Esophagus muscularis mucosa (tissue), 4 donors: ENCODE measurements at regions of chr6 and their contacts with region 1.

Region 1: GRCh38 chr6:87165185-87165584 is 9.8 kb downstream of the ZNF292 start:
- DNase-seq: no peak
- H3K4me3 ChIP-seq: no peak overlapping the region
- H3K27ac ChIP-seq: no peak overlapping the region
- H3K4me1 ChIP-seq: peaks cover 13 to 77% (median 70%) of the 10 kb centered on the region in 4 donors
- H3K27me3 ChIP-seq: no peaks in the 10 kb centered on the region
- CTCF ChIP-seq: no peak
- EP300 ChIP-seq: no peak
- POLR2A ChIP-seq: no peak

Region 2: DNA sequence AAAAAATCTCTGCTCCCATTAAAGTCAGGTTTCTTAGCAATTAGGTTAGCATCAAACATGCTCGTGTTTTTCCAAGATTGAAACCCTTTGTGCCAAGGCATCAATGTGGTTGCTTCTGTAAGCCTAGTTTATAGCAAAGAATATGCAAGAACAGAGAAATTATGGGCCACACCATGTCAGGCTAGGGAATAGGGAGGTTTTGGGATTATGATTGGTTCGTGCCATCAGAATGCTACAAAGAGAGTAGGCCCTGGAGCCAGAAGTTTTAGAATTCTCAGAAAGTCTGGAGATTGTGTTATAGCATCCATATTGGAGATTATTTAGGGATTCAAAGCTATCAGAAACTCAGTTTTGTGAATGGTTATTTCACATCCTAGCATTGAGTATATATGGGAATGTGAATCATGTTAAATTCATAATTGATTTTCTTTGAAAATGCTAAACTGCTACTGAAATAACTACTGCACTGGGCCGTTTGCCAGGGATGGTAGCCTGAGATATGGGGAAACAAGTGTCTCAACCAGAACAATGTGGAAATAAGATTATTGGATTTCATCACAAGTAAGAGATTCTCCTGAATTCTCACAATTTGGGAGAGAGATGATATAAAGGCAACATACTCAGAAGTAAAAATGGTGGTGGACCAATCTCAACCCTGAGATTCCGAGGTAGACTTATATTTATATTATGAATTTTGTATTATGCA is 35.4 kb after region 1 on chr6:
- intact Hi-C with region 1: loop called (anchors 5 kb)
- DNase-seq: no peak
- H3K4me3 ChIP-seq: no peak overlapping the region
- H3K27ac ChIP-seq: no peak overlapping the region
- H3K4me1 ChIP-seq: peaks cover 17 to 30% (median 23%) of the 10 kb centered on the region in 4 donors
- H3K27me3 ChIP-seq: no peaks in the 10 kb centered on the region
- CTCF ChIP-seq: no peak
- EP300 ChIP-seq: no peak
- POLR2A ChIP-seq: no peak

Region 3: DNA sequence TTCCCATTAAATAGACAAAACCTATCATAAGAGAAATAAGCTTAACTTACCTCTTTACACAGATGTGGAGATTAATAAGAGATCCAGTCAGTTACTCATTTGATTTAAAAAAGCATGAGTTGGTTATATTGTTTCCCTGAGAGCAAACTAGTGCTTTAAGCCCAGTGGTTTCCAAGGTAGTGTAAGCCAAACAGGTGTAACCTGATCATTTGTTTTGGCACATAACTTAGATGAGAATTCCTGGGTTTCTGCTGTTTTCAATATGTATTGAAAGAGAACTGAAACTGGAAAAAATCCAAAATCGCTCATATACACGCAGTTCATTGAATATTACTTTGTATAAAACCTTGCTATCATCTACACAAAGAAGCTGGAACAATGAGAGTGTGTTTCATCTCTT is 126.7 kb after region 1 on chr6:
- intact Hi-C with region 1: no loop called
- DNase-seq: no peak
- H3K4me3 ChIP-seq: no peak overlapping the region
- H3K27ac ChIP-seq: no peak overlapping the region
- H3K4me1 ChIP-seq: no peaks in the 10 kb centered on the region
- H3K27me3 ChIP-seq: no peaks in the 10 kb centered on the region
- CTCF ChIP-seq: no peak
- EP300 ChIP-seq: no peak
- POLR2A ChIP-seq: no peak

Region 4: GRCh38 chr6:87514831-87515230 is 349.6 kb after region 1 on chr6:
- intact Hi-C with region 1: no loop called
- DNase-seq: no peak
- H3K4me3 ChIP-seq: no peak overlapping the region
- H3K27ac ChIP-seq: no peak overlapping the region
- H3K4me1 ChIP-seq: no peaks in the 10 kb centered on the region
- H3K27me3 ChIP-seq: no peaks in the 10 kb centered on the region
- CTCF ChIP-seq: no peak
- EP300 ChIP-seq: no peak
- POLR2A ChIP-seq: no peak

Region 5: GRCh38 chr6:87881342-87881895 is 716.2 kb after region 1 on chr6:
- intact Hi-C with region 1: no loop called
- DNase-seq: no peak
- H3K4me3 ChIP-seq: no peak overlapping the region
- H3K27ac ChIP-seq: no peak overlapping the region
- H3K4me1 ChIP-seq: peaks cover 0 to 5% (median 0%) of the 10 kb centered on the region in 4 donors
- H3K27me3 ChIP-seq: no peaks in the 10 kb centered on the region
- CTCF ChIP-seq: no peak
- EP300 ChIP-seq: no peak
- POLR2A ChIP-seq: no peak